AG04450 (cell line): ENCODE measurements at regions of chr10 and their contacts with region 1.

Region 1: GRCh38 chr10:92834986-92835385 is 13.3 kb upstream of the EXOC6 start:
- DNase-seq: no peak
- H3K4me3 ChIP-seq: no peak overlapping the region
- H3K27ac ChIP-seq: no peak overlapping the region
- H3K27me3 ChIP-seq: no peaks in the 10 kb centered on the region
- CTCF ChIP-seq: no peak

Region 2: DNA sequence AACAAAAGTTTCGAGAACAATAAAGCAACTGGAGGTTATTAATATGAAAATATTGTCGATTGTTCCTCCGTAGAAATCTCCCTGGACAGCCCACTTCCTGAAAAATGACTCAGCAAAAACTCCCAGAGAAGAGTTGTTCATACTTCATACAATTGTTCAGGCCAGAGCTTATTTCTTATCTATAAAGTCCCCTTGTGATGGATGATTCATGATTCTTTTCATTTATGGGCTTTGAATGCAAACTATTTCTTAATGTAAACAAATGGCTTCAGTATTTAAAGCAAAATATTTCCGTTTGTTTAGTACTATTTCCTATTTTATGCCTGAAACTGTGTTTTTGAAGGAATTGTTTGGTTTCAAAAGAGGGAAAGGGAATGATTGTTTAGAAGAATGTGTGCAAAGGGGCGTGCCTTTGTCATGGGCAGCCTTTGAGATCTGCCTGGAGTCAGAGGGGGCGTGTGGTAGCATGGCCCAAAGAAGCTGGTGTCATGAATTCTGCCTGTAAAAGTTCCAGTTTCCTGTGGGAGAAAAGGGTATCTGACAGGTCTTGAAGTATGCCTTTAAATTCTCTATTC is 12.8 kb before region 1 on chr10:
- CTCF ChIA-PET with region 1: interaction called, 5 read pairs
- POLR2A ChIA-PET with region 1: interaction called, 11 read pairs
- DNase-seq: peak; percentile 73
- H3K4me3 ChIP-seq: no peak overlapping the region
- H3K27ac ChIP-seq: peak overlapping the region; percentile 92
- H3K27me3 ChIP-seq: no peaks in the 10 kb centered on the region
- CTCF ChIP-seq: no peak